ENCODE measurements at regions of chr2 and their contacts with region 1.

Region 1: GRCh38 chr2:12931186-12931844 is 214.6 kb downstream of the TRIB2 start:
- DNase-seq: peak; percentile 81

Region 2: GRCh38 chr2:12728221-12728777 is 203.0 kb before region 1 on chr2:
- in situ Hi-C with region 1: loop called (anchors 25 kb)
- DNase-seq: no peak